ENCODE measurements at regions of chr10 and their contacts with region 1.

Region 1: GRCh38 chr10:26334932-26335573 is 103.1 kb upstream of the APBB1IP start:
- DNase-seq: peak; percentile 81

Region 2: GRCh38 chr10:25327273-25327672 is 1007.8 kb before region 1 on chr10:
- intact Hi-C with region 1: no loop called
- DNase-seq: no peak

Region 3: GRCh38 chr10:26112532-26112931 is 222.5 kb before region 1 on chr10:
- intact Hi-C with region 1: no loop called
- DNase-seq: no peak

Region 4: GRCh38 chr10:26556748-26557640 is 221.9 kb after region 1 on chr10:
- intact Hi-C with region 1: loop called (anchors 5 to 10 kb)
- DNase-seq: no peak

Region 5: DNA sequence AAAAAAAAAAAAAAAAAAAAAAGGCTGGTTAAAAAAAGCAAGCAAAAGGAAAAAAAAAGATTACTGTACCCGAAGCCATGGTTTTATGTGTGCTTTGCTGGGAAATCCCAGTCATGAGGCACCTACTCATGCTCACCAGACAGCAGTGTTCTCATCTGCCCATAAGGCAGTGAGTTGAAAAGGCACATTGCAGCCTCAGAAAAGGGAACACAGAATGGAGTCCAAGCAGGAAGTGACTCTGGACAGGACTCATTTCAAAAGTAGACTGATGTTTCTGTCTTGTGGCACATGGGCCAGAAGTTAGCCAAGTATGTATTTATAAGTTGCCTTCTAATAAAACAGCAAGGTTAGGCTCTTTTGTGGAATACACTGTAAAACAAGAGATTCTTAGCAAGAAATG is 402.7 kb after region 1 on chr10:
- intact Hi-C with region 1: no loop called
- DNase-seq: no peak

Measured in posterior vena cava (tissue), 2 donors.